ENCODE measurements at regions of chr6 and their contacts with region 1.

Region 1: GRCh38 chr6:8983188-8983688 is 547.9 kb upstream of the SLC35B3 start:
- DNase-seq: no peak
- H3K4me3 ChIP-seq: no peak overlapping the region; the same call in 1 of the 2 replicates
- CTCF ChIP-seq: peak; percentile 91

Region 2: GRCh38 chr6:8499540-8499939 is 483.7 kb before region 1 on chr6:
- CTCF ChIA-PET with region 1: no interaction called
- POLR2A ChIA-PET with region 1: no interaction called
- DNase-seq: no peak
- H3K4me3 ChIP-seq: no peak overlapping the region
- CTCF ChIP-seq: peak; percentile 4

Region 3: DNA sequence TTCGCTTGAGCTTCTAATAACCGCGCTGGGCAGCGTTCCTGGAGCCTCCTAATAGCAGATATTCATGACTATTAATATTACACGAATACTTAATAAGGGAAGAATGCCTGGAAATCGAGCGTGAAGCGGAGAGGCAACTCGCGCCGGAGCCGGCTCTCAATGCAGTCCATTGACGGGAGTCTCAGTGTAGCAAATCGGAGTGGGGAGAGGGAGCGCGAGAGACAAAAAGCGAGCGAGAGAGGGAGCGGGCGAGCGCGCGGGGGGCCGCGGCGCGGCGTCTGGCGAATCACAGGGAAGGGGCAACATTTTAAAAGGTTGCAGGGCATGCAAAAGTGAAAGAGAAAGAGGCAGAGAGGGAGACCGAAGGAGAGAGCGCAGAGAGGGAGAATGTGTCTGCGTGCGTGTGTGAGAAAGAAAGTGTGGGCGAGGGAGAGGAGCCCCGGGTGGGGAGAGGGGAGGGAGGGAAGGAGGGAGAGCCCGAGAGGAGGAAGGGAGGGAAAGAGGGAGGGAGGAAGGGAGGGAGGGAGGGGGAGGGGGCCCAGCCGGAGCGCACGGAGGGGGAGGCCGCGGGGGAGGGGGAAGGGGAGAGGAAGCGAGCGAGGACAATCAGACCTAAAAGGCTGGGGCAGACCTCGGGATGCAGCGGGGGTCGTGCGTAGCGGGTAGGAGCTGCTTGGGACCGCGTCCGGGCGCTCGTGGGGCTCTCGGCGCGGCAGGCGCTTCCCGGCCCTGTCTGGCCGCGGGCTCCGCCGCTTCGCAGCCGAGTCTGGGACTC is 1428.9 kb after region 1 on chr6:
- CTCF ChIA-PET with region 1: interaction called, 20 read pairs
- POLR2A ChIA-PET with region 1: no interaction called
- DNase-seq: no peak
- H3K4me3 ChIP-seq: peak overlapping the region; percentile 62
- CTCF ChIP-seq: no peak

Region 4: GRCh38 chr6:10429638-10430427 is 1446.6 kb after region 1 on chr6:
- CTCF ChIA-PET with region 1: interaction called, 54 read pairs
- POLR2A ChIA-PET with region 1: no interaction called
- DNase-seq: no peak
- H3K4me3 ChIP-seq: peak overlapping the region; percentile 23; the same call in 1 of the 2 replicates
- CTCF ChIP-seq: peak; percentile 42

Region 5: DNA sequence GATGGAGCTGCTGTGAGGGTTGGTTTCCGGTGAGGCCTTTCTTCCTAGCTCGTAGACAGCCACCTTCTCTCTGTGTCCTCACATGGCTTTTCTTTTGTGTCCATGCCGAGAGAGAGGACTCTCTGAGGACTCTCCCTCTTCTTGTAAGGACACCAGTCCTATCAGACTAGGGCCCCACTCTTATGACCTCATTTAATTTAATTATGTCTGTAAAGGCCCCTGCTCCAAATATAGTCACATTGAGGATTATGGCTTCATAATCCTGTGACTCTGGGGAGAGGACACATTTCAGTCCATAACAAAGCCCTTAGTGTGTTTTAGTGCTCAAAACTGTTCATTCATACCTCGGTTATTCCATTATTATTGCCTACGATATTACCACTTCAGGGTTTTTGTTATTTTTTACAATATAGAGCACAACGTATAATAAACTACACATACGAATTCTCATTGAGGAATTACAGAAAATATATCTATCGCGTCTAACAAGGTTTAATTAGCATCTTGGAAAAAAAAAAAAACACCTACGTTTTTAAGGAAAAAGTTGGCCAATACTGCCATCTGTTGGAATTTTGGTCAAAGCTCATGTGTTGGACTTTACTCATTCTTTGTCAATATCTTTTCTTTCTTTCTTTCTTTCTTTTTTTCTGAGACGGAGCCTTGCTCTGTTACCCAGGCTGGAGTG is 1451.6 kb after region 1 on chr6:
- CTCF ChIA-PET with region 1: interaction called, 54 read pairs
- POLR2A ChIA-PET with region 1: no interaction called
- DNase-seq: no peak
- H3K4me3 ChIP-seq: no peak overlapping the region
- CTCF ChIP-seq: peak; percentile 39

Measured in AG04449 (cell line).